ENCODE measurements at regions of chr17 and their contacts with region 1.

Region 1: GRCh38 chr17:72097144-72097543 is 23.7 kb upstream of the SOX9 start:
- DNase-seq: no peak
- H3K4me3 ChIP-seq: no peak overlapping the region
- H3K27ac ChIP-seq: no peak overlapping the region
- H3K4me1 ChIP-seq: no peaks in the 10 kb centered on the region
- H3K27me3 ChIP-seq: no peaks in the 10 kb centered on the region
- CTCF ChIP-seq: no peak
- POLR2A ChIP-seq: no peak

Region 2: DNA sequence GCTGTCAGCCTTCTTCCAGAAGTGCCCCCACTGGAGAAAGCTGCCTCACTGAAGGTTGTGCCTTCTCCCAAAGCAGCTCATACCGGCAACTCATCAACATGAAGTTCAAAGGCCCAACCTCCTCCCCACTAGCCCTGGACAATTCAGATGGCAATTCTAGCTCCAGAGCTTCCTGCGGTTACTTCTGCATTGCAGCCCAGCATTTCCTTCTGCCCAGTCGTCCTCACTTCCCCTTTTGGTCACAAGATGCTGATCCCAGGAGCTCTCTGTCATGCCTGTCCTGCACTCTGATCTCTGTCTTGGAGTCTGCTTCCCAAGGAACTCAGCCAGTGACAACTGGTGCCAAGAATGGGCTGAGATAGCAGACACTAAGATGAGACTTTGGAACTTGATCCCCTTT is 154.5 kb before region 1 on chr17:
- CTCF ChIA-PET with region 1: no interaction called
- POLR2A ChIA-PET with region 1: no interaction called
- dilution Hi-C with region 1: no loop called
- intact Hi-C with region 1: no loop called
- DNase-seq: no peak
- H3K4me3 ChIP-seq: no peak overlapping the region
- H3K27ac ChIP-seq: no peak overlapping the region
- H3K4me1 ChIP-seq: no peaks in the 10 kb centered on the region
- H3K27me3 ChIP-seq: no peaks in the 10 kb centered on the region
- CTCF ChIP-seq: no peak
- POLR2A ChIP-seq: no peak

Region 3: DNA sequence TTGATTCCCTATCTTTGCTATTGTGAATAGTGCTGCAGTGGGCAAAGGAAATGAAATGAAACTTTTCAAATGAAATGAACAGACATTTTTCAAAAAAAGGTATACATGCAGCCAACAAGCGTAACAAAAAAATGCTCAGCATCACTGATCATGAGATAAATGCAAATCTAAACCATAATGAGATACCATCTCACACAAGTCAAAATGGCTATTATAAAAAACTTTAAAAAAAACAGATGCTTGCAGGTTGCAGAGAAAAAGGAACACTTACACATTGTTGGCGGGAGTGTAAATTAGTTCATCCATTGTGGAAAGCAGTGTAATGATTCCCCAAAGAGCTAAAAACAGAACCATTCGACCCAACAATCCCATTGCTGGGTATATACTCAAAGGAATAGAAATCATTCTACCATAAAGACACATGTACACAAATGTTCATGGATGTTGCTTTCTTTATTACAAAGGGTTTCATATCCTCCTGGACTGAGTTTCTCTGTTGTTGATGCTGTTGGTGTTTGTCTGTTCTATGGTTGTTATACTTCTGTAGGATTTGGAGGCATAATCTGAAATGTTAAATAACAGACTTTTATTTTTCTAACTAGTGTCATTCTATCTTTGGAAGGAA is 75.6 kb before region 1 on chr17:
- CTCF ChIA-PET with region 1: no interaction called
- POLR2A ChIA-PET with region 1: no interaction called
- dilution Hi-C with region 1: no loop called
- intact Hi-C with region 1: no loop called
- DNase-seq: no peak
- H3K4me3 ChIP-seq: no peak overlapping the region
- H3K27ac ChIP-seq: no peak overlapping the region
- H3K4me1 ChIP-seq: no peaks in the 10 kb centered on the region
- H3K27me3 ChIP-seq: no peaks in the 10 kb centered on the region
- CTCF ChIP-seq: no peak
- POLR2A ChIP-seq: no peak

Region 4: DNA sequence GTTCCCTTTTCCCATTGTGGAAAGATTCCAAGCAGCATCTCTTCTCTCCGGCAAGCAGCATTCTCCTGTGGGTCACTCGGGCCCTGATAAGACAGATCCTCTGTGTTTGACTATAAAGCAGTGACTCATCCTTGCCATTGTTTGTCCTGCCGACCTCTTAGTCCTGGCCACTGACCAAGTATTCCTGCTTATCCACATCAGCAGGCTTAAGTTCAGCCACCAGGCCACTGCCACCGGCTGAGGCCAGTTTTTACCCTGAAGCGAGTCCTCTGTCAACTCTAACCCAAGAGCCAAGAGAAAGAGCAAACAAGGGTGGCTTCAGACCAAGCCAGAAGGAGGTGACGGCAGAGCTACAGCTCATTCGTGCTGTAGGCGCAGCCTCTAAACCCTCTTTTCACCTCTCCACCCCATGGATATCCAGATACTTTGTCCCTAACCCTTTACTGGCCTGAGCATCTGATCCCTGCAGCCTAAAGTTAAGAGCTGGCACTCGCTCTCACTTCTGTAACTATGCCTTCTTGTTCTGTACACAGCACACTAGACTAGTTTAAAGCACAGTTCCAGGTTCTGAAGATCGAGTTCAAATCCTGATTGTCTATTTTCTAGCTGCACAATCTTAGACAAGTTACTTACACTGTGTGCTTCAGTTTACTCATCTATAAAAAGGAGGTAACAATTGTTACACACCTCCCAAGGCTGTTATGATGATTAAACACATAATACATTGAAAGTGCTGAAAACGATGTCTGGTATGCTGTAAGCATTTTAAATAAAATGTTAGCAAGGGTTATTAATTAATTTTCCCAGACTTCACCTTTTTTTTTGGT is 54.6 kb after region 1 on chr17:
- CTCF ChIA-PET with region 1: no interaction called
- POLR2A ChIA-PET with region 1: interaction called, 14 read pairs
- dilution Hi-C with region 1: no loop called
- intact Hi-C with region 1: no loop called
- DNase-seq: no peak
- H3K4me3 ChIP-seq: no peak overlapping the region
- H3K27ac ChIP-seq: no peak overlapping the region
- H3K4me1 ChIP-seq: no peaks in the 10 kb centered on the region
- H3K27me3 ChIP-seq: no peaks in the 10 kb centered on the region
- CTCF ChIP-seq: no peak
- POLR2A ChIP-seq: no peak

Measured in endothelial cell of umbilical vein (primary cell).